Panc1 (cell line): ENCODE measurements at regions of chr11 and their contacts with region 1.

Region 1: GRCh38 chr11:46607516-46607915 is 9.5 kb downstream of the HARBI1 start:
- DNase-seq: no peak
- ATAC-seq: no peak
- H3K4me3 ChIP-seq: no peak overlapping the region
- H3K27ac ChIP-seq: no peak overlapping the region
- H3K4me1 ChIP-seq: peaks cover 11% of the 10 kb centered on the region; the same call in 1 of the 2 replicates
- H3K27me3 ChIP-seq: no peaks in the 10 kb centered on the region
- CTCF ChIP-seq: no peak

Region 2: GRCh38 chr11:46332568-46333393 is 274.7 kb before region 1 on chr11:
- CTCF ChIA-PET with region 1: interaction called, 11 read pairs
- POLR2A ChIA-PET with region 1: no interaction called
- in situ Hi-C with region 1: no loop called
- intact Hi-C with region 1: no loop called
- DNase-seq: no peak
- ATAC-seq: peak; percentile 65
- H3K4me3 ChIP-seq: peak overlapping the region; percentile 28 to 33
- H3K27ac ChIP-seq: no peak overlapping the region
- H3K4me1 ChIP-seq: no peaks in the 10 kb centered on the region
- H3K27me3 ChIP-seq: peaks cover 13% of the 10 kb centered on the region
- CTCF ChIP-seq: no peak

Region 3: GRCh38 chr11:46593550-46594373 is 13.8 kb before region 1 on chr11 and contains the start of gene AMBRA1:
- CTCF ChIA-PET with region 1: interaction called, 5 read pairs
- POLR2A ChIA-PET with region 1: interaction called, 13 read pairs
- in situ Hi-C with region 1: no loop called
- intact Hi-C with region 1: no loop called
- DNase-seq: peak; percentile 92
- ATAC-seq: peak; percentile 91
- H3K4me3 ChIP-seq: peak within 1 kb of the TSS; percentile 89 to 99
- H3K27ac ChIP-seq: peak within 1 kb of the TSS; percentile 97
- H3K4me1 ChIP-seq: peaks cover 33% of the 10 kb centered on the region
- H3K27me3 ChIP-seq: no peaks in the 10 kb centered on the region
- CTCF ChIP-seq: no peak
- total RNA-seq, gene AMBRA1: 40.0 TPM